Head of caudate nucleus (tissue), 42 donors: ENCODE measurements at regions of chr9 and their contacts with region 1.

Region 1: DNA sequence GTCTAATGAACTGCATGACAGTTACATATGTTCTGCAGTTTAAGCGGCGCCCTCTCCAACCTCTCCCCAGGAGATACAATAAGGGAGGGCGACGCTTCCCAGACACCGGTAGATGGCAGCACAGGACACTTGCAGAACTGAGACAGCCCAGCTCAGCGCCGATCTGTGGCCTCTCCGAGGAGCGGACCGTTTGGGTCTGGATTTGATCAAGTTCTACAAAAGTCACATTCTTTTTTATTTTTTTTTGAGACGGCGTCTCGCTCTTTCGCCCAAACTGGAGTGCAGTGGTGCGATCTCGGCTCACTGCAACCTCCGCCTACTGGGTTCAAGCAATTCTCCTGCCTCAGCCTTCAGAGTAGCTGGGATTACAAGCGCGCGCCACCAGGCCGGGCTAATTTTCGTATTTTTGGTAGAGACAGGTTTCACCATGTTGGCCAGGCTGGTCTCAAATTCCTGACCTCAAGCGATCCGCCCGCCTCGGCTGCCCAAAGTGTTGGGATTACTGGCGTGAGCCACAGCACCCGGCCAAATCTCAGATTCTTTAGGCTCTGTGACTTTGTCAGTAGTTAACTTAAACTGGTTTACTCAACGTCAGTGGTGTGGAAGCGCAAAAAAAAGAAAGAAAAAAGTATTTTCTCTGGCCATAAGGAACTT is 1.4 kb upstream of the ATOSB start:
- DNase-seq: peak; percentile 84 to 98 (median 94)

Region 2: GRCh38 chr9:35258676-35259474 is 141.8 kb after region 1 on chr9:
- intact Hi-C with region 1: loop called (anchors 5 kb)
- DNase-seq: peak; percentile 50 to 90 (median 78)

Region 3: GRCh38 chr9:35476596-35476995 is 359.6 kb after region 1 on chr9:
- intact Hi-C with region 1: loop called (anchors 5 kb)
- DNase-seq: no peak